B cell (primary cell): ENCODE measurements at regions of chr11 and their contacts with region 1.

Region 1: DNA sequence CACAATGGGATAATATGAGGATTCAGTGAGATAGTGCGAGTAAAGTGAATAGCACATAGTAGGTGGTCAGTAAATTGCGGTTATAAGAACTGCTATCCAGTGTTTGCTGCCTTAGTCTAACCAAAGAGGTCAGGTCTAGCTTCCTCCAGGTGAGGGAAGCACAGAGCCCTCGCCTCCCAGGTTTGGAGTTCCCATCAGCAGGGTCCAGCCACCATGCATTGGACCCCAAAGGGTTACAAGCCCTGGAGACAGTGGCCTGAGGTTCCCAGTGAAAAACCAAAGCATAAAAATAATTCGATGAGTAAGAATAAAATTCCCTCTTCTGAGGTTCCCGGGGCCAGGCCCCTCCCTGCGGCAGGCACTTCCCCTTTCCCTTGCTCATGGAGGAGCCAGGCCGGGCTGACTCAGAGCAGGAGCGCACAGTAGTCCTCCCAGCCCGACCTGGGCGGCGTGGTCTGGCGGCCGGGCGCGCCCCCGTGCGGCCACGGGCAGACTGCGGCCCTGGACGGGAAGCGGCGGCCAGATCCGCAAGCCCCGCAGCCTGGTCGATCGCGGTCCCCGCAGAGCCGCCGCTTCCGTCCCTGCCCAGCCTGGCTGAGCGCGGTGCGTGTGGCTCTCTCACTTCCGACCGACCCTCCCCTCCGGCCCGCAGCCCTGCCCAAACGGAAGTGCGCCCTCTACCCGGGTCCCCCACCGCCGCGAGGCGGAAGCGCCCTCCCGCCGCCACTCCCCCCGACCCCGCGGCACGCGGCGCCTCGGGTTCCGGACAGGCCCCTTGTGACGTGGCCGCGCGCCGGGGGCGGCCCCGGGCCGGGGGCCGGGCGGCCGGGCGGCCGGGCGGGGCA is at the start of gene SLC39A13:
- DNase-seq: peak; percentile 98
- ATAC-seq: peak; percentile 81
- H3K4me3 ChIP-seq: peak within 1 kb of the TSS; percentile 60 to 94 (median 66)
- H3K4me3 Mint-ChIP-seq: peak within 1 kb of the TSS; percentile 92
- H3K27ac ChIP-seq: peak within 1 kb of the TSS; percentile 85 to 91
- H3K27ac Mint-ChIP-seq: peak within 1 kb of the TSS; percentile 95
- H3K4me1 ChIP-seq: peaks cover 16 to 25% of the 10 kb centered on the region in 2 donors
- H3K4me1 Mint-ChIP-seq: peaks cover 27% of the 10 kb centered on the region
- H3K27me3 ChIP-seq: no peaks in the 10 kb centered on the region
- H3K27me3 Mint-ChIP-seq: no peaks in the 10 kb centered on the region
- CTCF ChIP-seq: peak; percentile 92
- total RNA-seq, gene SLC39A13: 33.0 and 39.4 TPM in 2 replicates

Region 2: DNA sequence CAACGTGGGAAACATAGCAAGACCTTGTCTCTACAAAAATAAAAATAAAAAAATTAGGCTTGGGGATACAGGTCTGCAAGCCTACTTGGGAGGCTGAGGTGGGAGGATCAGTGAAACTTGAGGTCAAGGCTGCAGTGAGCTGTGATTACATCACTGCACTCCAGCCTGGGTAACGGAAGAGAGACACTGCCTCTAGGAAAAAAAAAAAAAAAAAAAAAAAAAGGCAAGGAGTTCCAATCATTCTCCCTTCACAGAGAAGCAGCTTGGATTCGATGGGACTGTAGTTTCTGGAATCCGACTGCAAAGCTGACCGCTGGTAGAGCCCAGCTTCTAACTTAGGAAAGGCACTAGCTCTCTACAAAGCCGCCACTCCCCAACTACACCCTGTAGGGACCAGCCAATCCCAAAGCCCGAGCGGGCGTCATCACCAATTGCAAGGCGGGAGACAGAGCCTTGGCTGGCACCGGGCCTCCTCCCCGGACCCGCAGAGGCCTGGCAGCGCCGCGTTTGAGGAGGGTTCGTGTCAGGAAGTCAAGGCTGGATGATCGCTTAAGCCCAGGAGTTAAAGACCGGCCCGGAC is 193.9 kb before region 1 on chr11:
- CTCF ChIA-PET with region 1: interaction called, 23 read pairs
- POLR2A ChIA-PET with region 1: interaction called, 5 read pairs
- intact Hi-C with region 1: loop called (anchors 1 kb)
- DNase-seq: peak; percentile 88
- ATAC-seq: peak; percentile 79
- H3K4me3 ChIP-seq: peak overlapping the region; percentile 71 to 92 (median 76)
- H3K4me3 Mint-ChIP-seq: peak overlapping the region; percentile 98
- H3K27ac ChIP-seq: peak overlapping the region; percentile 89
- H3K27ac Mint-ChIP-seq: peak overlapping the region; percentile 98
- H3K4me1 ChIP-seq: peaks cover 14 to 31% of the 10 kb centered on the region in 2 donors
- H3K4me1 Mint-ChIP-seq: peaks cover 30% of the 10 kb centered on the region
- H3K27me3 ChIP-seq: no peaks in the 10 kb centered on the region
- H3K27me3 Mint-ChIP-seq: no peaks in the 10 kb centered on the region
- CTCF ChIP-seq: no peak

Region 3: DNA sequence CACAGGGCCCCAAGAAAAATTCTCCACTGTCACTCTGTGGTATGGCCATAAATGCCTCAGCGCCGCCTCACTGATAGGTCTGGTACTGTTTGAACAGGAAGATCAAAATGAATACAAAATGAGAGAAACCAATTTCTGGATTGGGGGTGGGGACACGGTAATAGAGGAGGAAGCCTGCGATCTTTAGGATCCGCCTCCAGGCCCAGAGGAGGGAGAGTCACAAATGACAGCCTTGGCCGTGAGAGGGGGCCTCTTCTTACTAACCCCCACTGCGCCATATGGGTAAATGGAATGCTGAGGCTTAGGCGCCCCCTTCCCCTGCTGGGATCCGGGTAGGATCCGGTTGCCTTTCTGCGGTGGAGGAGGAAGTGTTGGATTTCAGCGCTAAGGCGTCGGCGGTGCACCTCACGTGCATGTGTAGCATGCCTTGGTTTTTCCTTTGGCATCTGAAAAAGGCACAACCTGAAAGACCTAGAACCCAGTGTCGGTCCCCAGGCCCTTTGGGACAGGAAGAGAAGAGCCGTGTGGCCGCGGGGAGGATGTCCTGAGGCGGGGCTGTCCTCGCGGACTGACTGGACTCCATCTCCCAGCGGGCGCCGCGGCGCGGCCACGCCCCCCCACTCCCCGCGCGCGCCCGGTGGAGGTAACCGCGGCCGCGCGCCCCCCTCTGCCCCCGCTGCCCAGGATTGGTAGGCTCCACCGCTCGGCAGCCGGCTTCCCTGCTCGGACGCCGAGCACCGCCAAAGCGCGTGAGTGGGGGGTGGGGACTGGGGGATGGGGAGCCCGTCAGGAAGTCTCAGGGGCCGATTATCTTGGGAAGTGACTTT is 138.8 kb before region 1 on chr11:
- CTCF ChIA-PET with region 1: interaction called, 5 read pairs
- POLR2A ChIA-PET with region 1: no interaction called
- intact Hi-C with region 1: loop called (anchors 1 kb)
- DNase-seq: peak; percentile 92
- ATAC-seq: peak; percentile 67
- H3K4me3 ChIP-seq: peak overlapping the region; percentile 58 to 89 (median 84)
- H3K4me3 Mint-ChIP-seq: peak overlapping the region; percentile 89
- H3K27ac ChIP-seq: peak overlapping the region; percentile 90 to 92
- H3K27ac Mint-ChIP-seq: peak overlapping the region; percentile 94
- H3K4me1 ChIP-seq: peaks cover 47 to 48% of the 10 kb centered on the region in 2 donors
- H3K4me1 Mint-ChIP-seq: peaks cover 55% of the 10 kb centered on the region
- H3K27me3 ChIP-seq: no peaks in the 10 kb centered on the region
- H3K27me3 Mint-ChIP-seq: no peaks in the 10 kb centered on the region
- CTCF ChIP-seq: no peak

Region 4: DNA sequence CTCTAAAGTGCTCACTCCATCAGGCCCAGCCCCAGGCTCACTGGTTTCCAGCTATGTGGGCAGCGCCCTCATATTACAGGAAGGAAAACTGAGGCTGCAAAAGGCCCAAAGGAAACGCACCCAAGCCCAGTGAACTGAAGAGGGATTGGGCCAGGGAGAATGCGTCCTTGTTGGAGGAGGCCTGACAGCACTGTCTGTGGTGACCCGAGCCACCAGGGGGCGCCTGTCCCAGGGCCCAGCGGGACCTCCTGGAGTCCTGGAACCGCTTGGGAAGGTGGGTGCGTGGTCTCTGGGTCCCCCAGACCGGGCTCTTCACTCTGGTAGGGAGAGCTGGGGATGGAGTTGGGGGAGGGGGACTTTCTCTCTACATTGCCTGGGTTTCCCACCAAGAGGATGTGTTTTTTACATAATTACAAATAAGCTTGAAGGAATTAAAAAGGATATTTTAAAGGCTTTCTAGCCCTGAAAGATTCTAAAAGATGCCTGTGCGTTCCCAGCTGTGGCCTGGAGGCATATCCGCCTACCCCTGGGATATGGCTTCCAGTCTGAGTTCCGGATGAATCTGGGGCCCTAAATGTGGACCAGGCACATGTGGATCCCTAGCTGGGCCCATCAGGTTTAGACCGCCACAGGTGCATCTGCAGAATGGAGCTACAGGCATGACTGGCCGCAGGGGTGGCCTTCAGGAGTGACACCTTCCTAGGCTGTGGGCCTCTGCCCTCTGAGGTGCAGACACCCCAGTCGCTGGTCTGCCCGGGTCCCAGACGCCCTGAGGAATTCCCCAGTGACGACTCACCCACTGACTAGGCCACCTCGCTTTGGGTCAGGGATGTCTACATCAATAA is 33.9 kb before region 1 on chr11:
- CTCF ChIA-PET with region 1: interaction called, 345 read pairs
- POLR2A ChIA-PET with region 1: interaction called, 15 read pairs
- intact Hi-C with region 1: loop called (anchors 1 kb)
- DNase-seq: peak; percentile 83
- ATAC-seq: peak; percentile 35
- H3K4me3 ChIP-seq: no peak overlapping the region
- H3K4me3 Mint-ChIP-seq: peak overlapping the region; percentile 41
- H3K27ac ChIP-seq: peak overlapping the region in 1 of 2 donors; percentile 68
- H3K27ac Mint-ChIP-seq: peak overlapping the region; percentile 65
- H3K4me1 ChIP-seq: peaks cover 40 to 46% of the 10 kb centered on the region in 2 donors
- H3K4me1 Mint-ChIP-seq: peaks cover 51% of the 10 kb centered on the region
- H3K27me3 ChIP-seq: no peaks in the 10 kb centered on the region
- H3K27me3 Mint-ChIP-seq: no peaks in the 10 kb centered on the region
- CTCF ChIP-seq: peak; percentile 91

Region 5: DNA sequence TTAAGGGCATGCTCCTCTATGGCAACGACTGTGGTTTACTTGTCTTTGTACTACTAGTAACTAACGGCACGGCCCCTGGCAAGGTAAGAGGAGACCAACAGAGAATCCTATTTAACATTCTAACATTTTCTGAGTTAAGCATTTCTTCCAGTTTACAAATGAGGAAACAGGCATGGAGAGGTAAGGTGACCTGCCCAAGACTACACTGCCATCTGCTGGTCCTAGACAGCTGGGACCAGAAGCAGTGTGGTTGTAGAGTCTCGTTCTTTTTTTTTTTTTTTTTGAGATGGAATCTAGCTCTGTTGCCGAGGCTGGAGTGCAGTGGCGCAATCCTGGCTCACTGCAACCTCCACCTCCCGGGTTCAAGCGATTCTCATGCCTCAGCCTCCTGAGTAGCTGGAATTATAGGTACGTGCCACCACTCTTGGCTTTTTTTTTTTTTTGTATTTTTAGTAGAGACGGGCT is 46.2 kb after region 1 on chr11:
- CTCF ChIA-PET with region 1: interaction called, 20 read pairs
- POLR2A ChIA-PET with region 1: no interaction called
- intact Hi-C with region 1: no loop called
- DNase-seq: peak; percentile 85
- ATAC-seq: peak; percentile 94
- H3K4me3 ChIP-seq: no peak overlapping the region
- H3K4me3 Mint-ChIP-seq: no peak overlapping the region
- H3K27ac ChIP-seq: no peak overlapping the region
- H3K27ac Mint-ChIP-seq: no peak overlapping the region
- H3K4me1 ChIP-seq: peaks cover 0 to 5% of the 10 kb centered on the region in 2 donors
- H3K4me1 Mint-ChIP-seq: peaks cover 4% of the 10 kb centered on the region
- H3K27me3 ChIP-seq: no peaks in the 10 kb centered on the region
- H3K27me3 Mint-ChIP-seq: no peaks in the 10 kb centered on the region
- CTCF ChIP-seq: peak; percentile 83

Region 6: GRCh38 chr11:47858169-47858543 is 450.2 kb after region 1 on chr11:
- CTCF ChIA-PET with region 1: interaction called, 7 read pairs
- POLR2A ChIA-PET with region 1: no interaction called
- intact Hi-C with region 1: loop called (anchors 10 kb)
- DNase-seq: no peak
- ATAC-seq: no peak
- H3K4me3 ChIP-seq: peak overlapping the region in 1 of 5 experiments; percentile 54
- H3K4me3 Mint-ChIP-seq: peak overlapping the region; percentile 63
- H3K27ac ChIP-seq: peak overlapping the region; percentile 80 to 84
- H3K27ac Mint-ChIP-seq: peak overlapping the region; percentile 86
- H3K4me1 ChIP-seq: peaks cover 98 to 99% of the 10 kb centered on the region in 2 donors
- H3K4me1 Mint-ChIP-seq: peaks cover 64% of the 10 kb centered on the region
- H3K27me3 ChIP-seq: no peaks in the 10 kb centered on the region
- H3K27me3 Mint-ChIP-seq: no peaks in the 10 kb centered on the region
- CTCF ChIP-seq: no peak